ENCODE measurements at regions of chr1 and their contacts with region 1.

Region 1: DNA sequence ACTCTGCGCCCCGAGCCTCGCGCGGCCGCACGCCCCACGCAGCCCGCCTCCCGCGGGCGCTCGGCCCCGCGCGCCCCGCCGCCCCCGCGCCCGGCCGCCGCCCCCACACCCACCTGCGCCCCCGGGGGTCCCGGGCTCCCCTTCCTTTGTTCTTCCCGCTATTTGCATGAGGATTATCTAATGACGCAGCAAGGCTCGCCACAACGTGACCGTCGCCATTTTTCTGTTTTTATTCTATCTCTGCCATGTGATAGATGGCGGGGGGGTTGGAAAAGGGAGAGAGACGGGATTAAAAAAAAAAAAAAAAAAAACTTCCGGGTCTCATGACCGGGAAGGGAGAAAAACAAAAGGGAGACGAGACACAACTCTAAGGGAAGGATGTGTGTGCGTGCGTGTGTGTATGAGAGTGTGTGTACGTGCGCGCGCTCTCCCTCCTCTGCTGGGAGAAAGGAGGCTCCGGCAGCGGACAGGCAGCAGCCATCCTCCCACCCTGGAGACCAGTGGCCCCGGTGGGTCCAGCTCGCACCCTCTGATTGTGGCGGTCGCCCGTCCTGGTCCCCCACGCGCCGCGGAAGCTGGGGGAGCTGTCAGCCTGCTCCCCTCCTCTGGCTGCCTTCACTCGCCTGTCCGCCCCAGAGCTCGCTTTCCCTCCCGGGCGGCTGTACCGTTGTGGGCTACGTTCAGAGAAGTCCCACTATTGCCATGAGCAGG is 80.4 kb upstream of the AK4 start:
- DNase-seq: peak; percentile 94
- H3K4me3 ChIP-seq: peak overlapping the region; percentile 89
- H3K27ac ChIP-seq: peak overlapping the region; percentile 88
- H3K4me1 ChIP-seq: peaks cover 32% of the 10 kb centered on the region
- H3K27me3 ChIP-seq: no peaks in the 10 kb centered on the region
- CTCF ChIP-seq: no peak

Region 2: GRCh38 chr1:64686828-64687724 is 380.6 kb before region 1 on chr1:
- CTCF ChIA-PET with region 1: no interaction called
- POLR2A ChIA-PET with region 1: no interaction called
- intact Hi-C with region 1: loop called (anchors 5 kb)
- DNase-seq: peak; percentile 81
- H3K4me3 ChIP-seq: no peak overlapping the region
- H3K27ac ChIP-seq: peak overlapping the region; percentile 45
- H3K4me1 ChIP-seq: peaks cover 32% of the 10 kb centered on the region
- H3K27me3 ChIP-seq: no peaks in the 10 kb centered on the region
- CTCF ChIP-seq: peak; percentile 92

Region 3: DNA sequence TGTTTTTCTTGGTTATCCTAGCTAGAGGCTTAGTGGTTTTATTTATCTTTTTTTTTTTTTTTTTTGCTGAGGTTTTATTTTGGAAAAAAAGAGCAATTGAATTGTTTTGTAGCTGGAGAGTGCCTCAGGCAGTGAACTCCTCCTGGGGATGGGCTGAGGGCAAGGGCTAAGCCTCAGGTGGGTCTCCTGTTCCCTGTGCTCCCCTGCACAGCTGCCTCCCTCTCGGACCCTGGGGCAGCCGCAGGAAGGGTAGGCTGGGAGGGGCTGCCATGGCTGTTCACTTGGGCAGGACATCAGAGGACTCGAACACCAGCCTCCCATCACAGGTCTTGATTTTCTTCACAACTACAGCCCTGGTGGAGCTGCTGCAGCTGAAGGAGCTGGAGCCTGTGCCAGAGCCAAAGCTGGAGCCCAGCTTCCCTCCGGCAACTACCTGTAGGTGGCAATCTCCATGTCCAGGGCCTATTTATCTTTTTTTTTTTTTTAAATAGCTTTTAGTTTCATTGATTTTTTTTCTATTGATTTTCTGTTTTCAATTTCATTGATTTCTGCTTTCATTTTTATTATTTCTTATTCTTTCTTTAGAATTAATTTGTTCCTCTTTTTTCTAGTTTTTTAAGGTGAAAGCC is 381.7 kb after region 1 on chr1:
- CTCF ChIA-PET with region 1: no interaction called
- POLR2A ChIA-PET with region 1: interaction called, 17 read pairs
- intact Hi-C with region 1: no loop called
- DNase-seq: no peak
- H3K4me3 ChIP-seq: no peak overlapping the region
- H3K27ac ChIP-seq: no peak overlapping the region
- H3K4me1 ChIP-seq: no peaks in the 10 kb centered on the region
- H3K27me3 ChIP-seq: no peaks in the 10 kb centered on the region
- CTCF ChIP-seq: no peak

Measured in A673 (cell line).